Left lung (tissue), 14 donors: ENCODE measurements at regions of chr9 and their contacts with region 1.

Region 1: DNA sequence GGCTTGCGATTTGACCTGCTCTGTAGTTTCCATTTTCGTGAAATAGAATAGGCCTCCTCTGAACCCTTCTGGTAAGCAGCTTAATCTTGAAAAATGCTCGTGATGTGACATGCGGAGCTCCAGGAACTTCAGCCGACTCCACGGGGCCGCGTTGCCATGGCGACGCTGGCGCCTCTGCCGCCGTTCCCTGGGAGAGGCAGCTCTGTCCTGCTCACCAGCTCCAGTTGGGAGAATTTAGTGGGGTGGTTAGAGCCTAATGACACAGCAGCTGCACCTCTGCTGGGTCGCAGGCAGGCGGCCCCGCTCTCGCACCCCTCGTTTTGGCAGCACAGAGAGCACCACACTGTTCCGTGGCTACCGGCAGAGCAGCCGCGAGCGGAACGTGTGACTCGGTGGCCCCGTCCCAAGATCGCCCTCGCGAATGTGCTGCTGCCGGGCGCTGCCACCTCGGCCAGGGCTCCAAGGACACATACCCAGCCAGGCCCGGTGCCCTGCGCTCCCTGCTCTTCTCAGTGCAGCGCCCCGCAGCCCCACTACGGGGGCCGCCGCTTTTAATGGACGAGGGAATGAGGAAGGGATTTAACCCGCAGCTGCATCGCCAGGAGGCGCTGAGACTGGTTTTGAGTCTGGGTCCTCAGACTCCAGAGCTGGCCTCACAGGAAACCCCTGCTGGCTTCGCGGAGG is 131.2 kb upstream of the LMX1B start:
- DNase-seq: peak in 3 of 4 donors; percentile 42 to 78 (median 66)
- ATAC-seq: no peak
- H3K4me3 ChIP-seq: no peak overlapping the region
- H3K27ac ChIP-seq: no peak overlapping the region
- H3K4me1 ChIP-seq: no peaks in the 10 kb centered on the region
- H3K27me3 ChIP-seq: no peaks in the 10 kb centered on the region
- CTCF ChIP-seq: no peak

Region 2: GRCh38 chr9:126301985-126302603 is 180.4 kb before region 1 on chr9:
- intact Hi-C with region 1: loop called in 1 of 2 experiments (anchors 10 kb)
- DNase-seq: peak in 2 of 4 donors; percentile 24 to 64
- ATAC-seq: peak; percentile 82
- H3K4me3 ChIP-seq: no peak overlapping the region
- H3K27ac ChIP-seq: no peak overlapping the region
- H3K4me1 ChIP-seq: no peaks in the 10 kb centered on the region
- H3K27me3 ChIP-seq: no peaks in the 10 kb centered on the region
- CTCF ChIP-seq: peak; percentile 61 to 63

Region 3: DNA sequence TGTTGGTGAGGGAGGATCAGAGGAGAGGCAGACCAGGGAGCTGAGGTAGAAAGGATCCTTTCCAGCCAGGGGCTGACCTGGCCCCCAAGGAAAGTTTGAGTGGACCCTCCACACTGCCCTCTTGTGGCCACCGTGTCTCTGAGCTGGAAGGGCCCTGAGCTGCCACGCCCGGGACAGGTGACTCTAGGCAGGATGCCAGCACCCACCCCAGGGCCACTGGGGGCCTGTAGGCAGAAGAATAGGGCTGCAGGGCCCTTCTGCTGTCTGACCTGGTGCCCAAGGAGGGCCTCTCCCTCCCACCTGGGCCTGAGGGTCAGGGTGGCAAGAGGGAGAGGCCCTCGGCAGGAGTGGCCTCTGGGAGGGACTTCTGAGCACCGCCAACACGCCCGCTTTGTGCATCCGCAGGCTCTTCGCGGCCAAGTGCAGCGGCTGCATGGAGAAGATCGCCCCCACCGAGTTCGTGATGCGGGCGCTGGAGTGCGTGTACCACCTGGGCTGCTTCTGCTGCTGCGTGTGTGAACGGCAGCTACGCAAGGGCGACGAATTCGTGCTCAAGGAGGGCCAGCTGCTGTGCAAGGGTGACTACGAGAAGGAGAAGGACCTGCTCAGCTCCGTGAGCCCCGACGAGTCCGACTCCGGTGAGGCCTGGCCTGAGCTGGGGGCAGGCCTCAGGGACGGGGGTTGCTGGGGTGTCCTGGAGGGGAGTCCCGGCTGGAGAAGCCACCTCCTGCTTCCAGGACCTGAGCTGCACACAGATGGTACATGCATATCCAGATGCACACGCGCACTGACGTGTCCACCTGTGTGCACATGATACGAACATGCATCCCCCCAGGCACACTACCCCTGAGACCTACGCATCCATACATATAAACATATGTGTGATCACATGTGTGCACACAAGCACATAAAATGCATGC is 208.2 kb after region 1 on chr9:
- intact Hi-C with region 1: no loop called
- DNase-seq: peak in 2 of 4 donors; percentile 36 to 75
- ATAC-seq: peak; percentile 82
- H3K4me3 ChIP-seq: no peak overlapping the region
- H3K27ac ChIP-seq: no peak overlapping the region
- H3K4me1 ChIP-seq: no peaks in the 10 kb centered on the region
- H3K27me3 ChIP-seq: peaks cover 8 to 86% of the 10 kb centered on the region in 2 donors
- CTCF ChIP-seq: peak; percentile 33 to 70